ENCODE measurements at regions of chr5 and their contacts with region 1.

Region 1: DNA sequence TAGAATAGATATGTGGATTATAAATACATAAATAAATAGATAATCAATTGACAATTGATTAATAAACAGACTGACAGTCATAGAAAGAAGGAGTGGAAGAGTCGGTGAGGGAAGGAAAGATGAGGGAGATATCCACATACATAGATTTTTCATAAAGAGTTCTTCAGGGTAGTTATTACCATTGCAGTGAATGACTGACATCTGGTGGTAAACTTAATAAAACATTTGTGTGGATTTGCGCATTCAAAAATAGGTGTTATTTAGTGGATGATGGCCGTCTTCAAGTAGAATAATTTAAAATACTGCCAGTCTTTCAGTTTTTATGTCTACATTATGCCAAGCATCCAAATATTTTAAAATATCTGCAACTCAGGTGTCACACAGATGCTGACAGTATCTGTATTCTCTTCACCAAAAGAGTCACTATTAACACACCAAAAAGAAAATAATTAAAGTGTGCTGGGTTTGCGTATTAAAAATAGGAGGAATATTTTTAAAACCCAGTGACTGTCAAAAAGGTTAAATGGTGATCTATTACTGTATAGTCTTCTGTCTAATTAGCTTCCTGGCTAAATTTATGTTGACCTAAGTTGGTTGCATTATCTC is 78.8 kb downstream of the GIN1 start:
- DNase-seq: no peak
- ATAC-seq: no peak
- H3K4me3 Mint-ChIP-seq: no peak overlapping the region
- H3K27ac Mint-ChIP-seq: no peak overlapping the region
- H3K4me1 Mint-ChIP-seq: no peaks in the 10 kb centered on the region
- H3K27me3 Mint-ChIP-seq: no peaks in the 10 kb centered on the region
- CTCF ChIP-seq: no peak

Region 2: GRCh38 chr5:102536323-102536928 is 504.7 kb before region 1 on chr5:
- CTCF ChIA-PET with region 1: interaction called, 3 read pairs
- POLR2A ChIA-PET with region 1: no interaction called
- intact Hi-C with region 1: loop called (anchors 1 kb)
- DNase-seq: no peak
- ATAC-seq: no peak
- H3K4me3 Mint-ChIP-seq: no peak overlapping the region
- H3K27ac Mint-ChIP-seq: no peak overlapping the region
- H3K4me1 Mint-ChIP-seq: peaks cover 2% of the 10 kb centered on the region
- H3K27me3 Mint-ChIP-seq: no peaks in the 10 kb centered on the region
- CTCF ChIP-seq: no peak

Region 3: DNA sequence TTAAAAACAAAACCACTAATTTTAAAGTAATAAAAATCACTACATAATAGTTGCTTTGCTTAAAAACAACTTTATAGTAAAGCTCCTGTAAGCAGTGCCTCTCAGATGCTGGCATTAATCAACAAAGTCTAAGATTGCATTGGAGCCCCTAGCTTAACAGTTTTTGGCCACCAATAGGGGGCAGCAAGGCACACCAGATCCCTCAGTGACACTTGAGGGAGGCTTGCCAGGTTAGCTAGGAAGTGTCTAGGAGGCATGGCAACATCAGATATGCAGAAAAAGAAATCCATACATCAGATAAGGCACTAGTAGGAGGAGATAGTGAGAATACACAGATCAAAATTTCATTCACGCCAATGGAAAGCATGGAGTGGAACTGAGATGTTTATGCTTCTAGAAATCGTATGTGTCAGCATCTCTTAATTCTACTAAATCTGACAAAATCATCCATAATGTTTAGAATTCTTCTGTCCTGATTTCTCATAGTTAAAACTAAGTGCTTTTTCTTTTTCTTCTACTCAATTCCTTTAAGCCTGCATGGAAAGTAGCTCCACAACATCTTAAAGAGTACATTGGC is 359.7 kb before region 1 on chr5:
- CTCF ChIA-PET with region 1: no interaction called
- POLR2A ChIA-PET with region 1: no interaction called
- intact Hi-C with region 1: loop called (anchors 1 kb)
- DNase-seq: no peak
- ATAC-seq: peak; percentile 31
- H3K4me3 Mint-ChIP-seq: no peak overlapping the region
- H3K27ac Mint-ChIP-seq: no peak overlapping the region
- H3K4me1 Mint-ChIP-seq: no peaks in the 10 kb centered on the region
- H3K27me3 Mint-ChIP-seq: no peaks in the 10 kb centered on the region
- CTCF ChIP-seq: no peak

Region 4: GRCh38 chr5:102778478-102778877 is 262.7 kb before region 1 on chr5:
- CTCF ChIA-PET with region 1: no interaction called
- POLR2A ChIA-PET with region 1: no interaction called
- intact Hi-C with region 1: loop called (anchors 1 kb)
- DNase-seq: no peak
- ATAC-seq: no peak
- H3K4me3 Mint-ChIP-seq: no peak overlapping the region
- H3K27ac Mint-ChIP-seq: no peak overlapping the region
- H3K4me1 Mint-ChIP-seq: peaks cover 6% of the 10 kb centered on the region
- H3K27me3 Mint-ChIP-seq: no peaks in the 10 kb centered on the region
- CTCF ChIP-seq: no peak

Measured in activated B cell treated with CpG ODN at 0.5 μM for 24 hours (primary cell).